ENCODE measurements at regions of chr1 and their contacts with region 1.

Region 1: DNA sequence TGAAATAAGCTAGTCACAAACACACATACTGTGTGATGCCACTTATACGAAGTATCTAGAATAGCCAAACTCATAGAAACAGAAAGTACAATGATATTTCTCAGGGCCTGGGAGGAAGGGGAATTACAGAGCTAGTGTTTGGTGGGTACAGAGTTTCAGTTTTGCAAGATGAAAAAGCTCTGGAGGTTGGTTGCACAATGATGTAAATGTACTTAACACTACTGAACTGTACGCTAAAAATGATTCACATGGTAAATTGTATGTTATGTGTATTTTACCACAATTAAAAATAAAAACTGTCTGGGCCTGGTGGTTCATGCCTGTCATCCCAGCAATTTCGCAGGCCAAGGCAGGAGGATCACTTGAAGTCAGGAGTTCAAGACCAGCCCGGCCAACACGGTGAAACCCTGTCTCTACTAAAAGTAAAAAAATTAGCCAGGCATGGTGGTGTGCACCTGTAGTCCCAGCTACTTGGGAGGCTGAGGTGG is 15.3 kb upstream of the FHAD1 start:
- DNase-seq: peak; percentile 50
- H3K4me3 Mint-ChIP-seq: no peak overlapping the region
- H3K27ac Mint-ChIP-seq: peak overlapping the region; percentile 54
- H3K4me1 Mint-ChIP-seq: peaks cover 15% of the 10 kb centered on the region
- H3K27me3 Mint-ChIP-seq: peaks cover 3% of the 10 kb centered on the region

Region 2: GRCh38 chr1:15110875-15111230 is 120.9 kb before region 1 on chr1:
- CTCF ChIA-PET with region 1: no interaction called
- POLR2A ChIA-PET with region 1: no interaction called
- intact Hi-C with region 1: loop called (anchors 1 kb)
- DNase-seq: no peak
- H3K4me3 Mint-ChIP-seq: no peak overlapping the region
- H3K27ac Mint-ChIP-seq: no peak overlapping the region
- H3K4me1 Mint-ChIP-seq: peaks cover 14% of the 10 kb centered on the region
- H3K27me3 Mint-ChIP-seq: peaks cover 11% of the 10 kb centered on the region

Region 3: DNA sequence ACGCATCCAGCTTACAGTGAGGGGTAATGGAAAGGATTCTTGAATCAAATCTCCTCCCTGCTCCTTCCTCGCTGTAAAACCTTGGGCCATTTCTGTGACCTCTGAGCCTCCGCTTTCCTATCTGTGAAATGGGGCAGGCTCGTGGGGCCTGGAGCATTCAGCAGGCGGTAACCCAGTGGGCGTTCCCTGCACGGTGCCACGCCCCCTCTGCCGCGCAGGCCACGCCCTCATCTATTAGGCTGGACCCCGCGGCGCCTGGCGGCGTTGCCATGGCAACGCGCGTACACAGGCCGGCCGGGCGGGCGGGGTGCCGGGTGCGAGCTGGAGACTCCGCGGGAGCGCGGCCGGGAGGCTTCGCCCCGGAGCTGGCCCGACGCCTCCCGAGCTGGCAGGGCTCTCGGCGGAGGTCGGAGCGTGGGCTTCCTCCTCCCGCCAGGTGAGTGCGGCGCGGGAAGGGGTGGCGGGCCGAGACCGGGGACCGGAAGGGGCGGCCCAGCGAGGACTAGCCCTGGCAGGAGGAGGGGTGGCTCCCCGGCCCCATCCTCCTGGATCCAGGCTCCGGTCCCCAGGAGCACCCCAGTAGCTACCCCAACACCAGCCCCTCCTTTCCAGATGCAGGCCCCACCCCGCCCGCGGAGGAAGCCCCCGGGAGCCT is 15.3 kb after region 1 on chr1 and contains the start of gene FHAD1:
- CTCF ChIA-PET with region 1: interaction called, 3 read pairs
- POLR2A ChIA-PET with region 1: interaction called, 9 read pairs
- intact Hi-C with region 1: loop called (anchors 1 kb)
- DNase-seq: peak; percentile 61
- H3K4me3 Mint-ChIP-seq: peak within 1 kb of the TSS; percentile 39
- H3K27ac Mint-ChIP-seq: no peak within 1 kb of the TSS
- H3K4me1 Mint-ChIP-seq: peaks cover 54% of the 10 kb centered on the region
- H3K27me3 Mint-ChIP-seq: peaks cover 50% of the 10 kb centered on the region
- total RNA-seq, gene FHAD1: not detected

Measured in activated CD4-positive, alpha-beta memory T cell treated with anti-CD3 and anti-CD28 coated beads for 36 hours (primary cell).